ENCODE measurements at regions of chr14 and their contacts with region 1.

Region 1: GRCh38 chr14:59576332-59577294 is at the start of gene CCDC175:
- DNase-seq: peak; percentile 87
- CTCF ChIP-seq: peak; percentile 90

Region 2: DNA sequence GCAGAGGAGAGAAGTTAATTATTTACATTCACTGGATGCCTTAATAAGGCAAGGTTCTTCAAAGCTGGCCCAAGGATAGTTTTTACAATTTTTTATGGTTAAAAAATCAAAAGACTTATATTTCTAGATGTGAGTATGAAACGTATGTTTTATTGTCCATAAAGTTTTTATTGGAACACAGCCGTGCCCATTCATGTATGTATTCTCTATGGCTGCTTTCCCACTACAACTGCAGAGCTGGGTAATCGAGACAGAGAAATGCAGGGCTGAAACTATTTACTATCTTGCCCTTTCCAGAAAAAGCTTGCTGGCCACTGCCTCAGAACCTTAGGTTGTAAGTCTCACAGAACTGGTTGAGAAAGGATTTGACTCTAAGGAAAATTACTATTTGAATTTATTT is 75.9 kb before region 1 on chr14:
- CTCF ChIA-PET with region 1: interaction called, 73 read pairs
- POLR2A ChIA-PET with region 1: no interaction called
- DNase-seq: no peak
- CTCF ChIP-seq: no peak

Region 3: DNA sequence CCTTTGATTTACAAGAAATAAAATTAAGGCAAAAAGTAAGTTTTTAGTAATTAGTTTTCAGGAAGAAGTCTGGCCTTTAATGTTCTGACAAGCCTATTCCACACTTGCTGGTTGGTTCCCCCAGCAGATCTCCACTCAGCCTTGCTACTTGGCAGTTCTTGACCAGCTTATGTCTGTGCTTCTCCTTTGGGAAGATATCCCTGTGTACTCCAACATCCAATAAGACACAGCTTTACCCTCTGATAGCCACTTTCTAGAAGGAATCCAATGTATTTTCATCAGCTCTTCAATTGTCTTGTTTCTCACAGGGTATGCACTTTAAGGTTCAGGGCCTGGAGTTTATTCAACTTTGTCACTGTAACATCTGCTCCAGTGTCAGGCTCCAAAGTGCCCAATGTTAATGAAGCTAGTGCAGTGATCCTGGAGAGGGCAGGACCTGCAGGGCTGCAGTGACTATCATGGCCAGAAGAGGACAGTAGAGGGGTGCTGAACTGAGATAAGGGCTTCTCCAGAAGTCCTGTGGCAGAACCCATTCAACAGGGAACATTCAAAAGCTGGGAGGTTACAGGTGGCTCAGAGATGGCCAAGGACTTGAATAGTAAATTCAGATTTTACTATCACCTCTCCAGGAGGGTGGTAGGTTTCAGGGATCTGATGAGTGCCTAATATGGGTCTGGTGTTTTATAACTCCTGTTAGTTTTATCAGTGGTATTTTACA is 69.4 kb before region 1 on chr14:
- CTCF ChIA-PET with region 1: interaction called, 73 read pairs
- POLR2A ChIA-PET with region 1: no interaction called
- DNase-seq: peak; percentile 40
- CTCF ChIP-seq: peak; percentile 78

Region 4: DNA sequence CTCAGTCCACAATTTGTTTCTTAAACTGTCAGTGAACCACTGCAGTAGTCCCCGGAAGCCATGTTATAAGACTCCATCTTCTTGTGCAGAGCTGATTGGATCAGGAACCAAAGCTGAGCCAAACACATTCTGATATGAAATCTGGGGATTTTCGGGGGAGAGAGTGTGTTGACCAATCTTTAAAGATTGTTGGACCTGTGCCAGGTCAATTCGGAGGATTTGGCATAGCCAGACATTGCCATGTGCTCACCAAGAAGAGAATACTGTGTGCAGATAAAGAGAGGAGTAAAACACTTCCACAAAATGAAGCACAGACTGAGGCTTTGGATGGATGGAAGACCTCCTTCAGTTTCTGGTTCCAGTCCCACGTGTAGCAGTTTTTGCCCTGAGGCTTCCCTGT is 16.3 kb before region 1 on chr14:
- CTCF ChIA-PET with region 1: interaction called, 25 read pairs
- POLR2A ChIA-PET with region 1: no interaction called
- DNase-seq: no peak
- CTCF ChIP-seq: no peak

Region 5: DNA sequence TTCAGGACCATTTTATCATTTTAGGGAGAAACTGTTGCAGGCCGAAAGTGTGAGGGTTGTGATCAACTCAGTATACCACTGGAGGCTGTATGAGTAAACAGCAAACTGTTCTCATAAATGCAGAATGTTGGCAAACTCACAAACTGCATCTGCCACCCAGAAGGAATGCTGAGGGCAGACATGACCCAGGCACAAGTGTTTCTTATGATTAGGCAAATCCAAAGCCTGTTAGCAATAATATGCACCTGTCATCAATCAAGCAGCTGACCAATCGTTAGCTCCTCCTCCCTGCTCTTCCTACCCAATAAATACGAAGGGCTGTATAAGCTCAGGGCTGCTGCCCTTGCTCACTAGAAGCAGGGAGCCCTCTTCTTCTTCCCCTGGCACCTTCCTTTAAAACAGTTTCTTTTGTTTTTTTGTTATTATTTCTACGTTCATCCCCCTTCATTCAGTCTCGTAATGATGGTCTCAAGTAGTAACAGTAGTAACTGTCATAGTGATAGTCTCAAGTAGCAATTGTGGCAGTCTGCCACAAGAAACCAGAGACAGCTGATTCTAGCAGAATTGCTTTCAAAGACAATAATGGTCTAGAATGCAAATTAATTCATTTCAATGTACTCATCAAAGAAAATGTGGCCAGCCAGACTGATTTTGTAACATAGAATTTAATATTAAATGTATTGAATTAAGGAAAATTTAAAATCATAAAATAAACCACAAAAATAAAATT is 15.2 kb after region 1 on chr14:
- CTCF ChIA-PET with region 1: interaction called, 11 read pairs
- POLR2A ChIA-PET with region 1: no interaction called
- DNase-seq: no peak
- CTCF ChIP-seq: no peak

Region 6: GRCh38 chr14:59600211-59600945 is 23.8 kb after region 1 on chr14:
- CTCF ChIA-PET with region 1: interaction called, 11 read pairs
- POLR2A ChIA-PET with region 1: no interaction called
- DNase-seq: no peak
- CTCF ChIP-seq: no peak